Ovary (tissue), 10 donors: ENCODE measurements at regions of chr17 and their contacts with region 1.

Region 1: GRCh38 chr17:35373984-35374765 is 754 bp upstream of the SLFN11 start:
- DNase-seq: peak; percentile 58 to 80 (median 73)
- H3K4me3 ChIP-seq: peak overlapping the region; percentile 78
- H3K27ac ChIP-seq: peak overlapping the region; percentile 95 to 98
- H3K4me1 ChIP-seq: no peaks in the 10 kb centered on the region
- H3K27me3 ChIP-seq: no peaks in the 10 kb centered on the region
- CTCF ChIP-seq: no peak
- EP300 ChIP-seq: no peak
- POLR2A ChIP-seq: no peak

Region 2: DNA sequence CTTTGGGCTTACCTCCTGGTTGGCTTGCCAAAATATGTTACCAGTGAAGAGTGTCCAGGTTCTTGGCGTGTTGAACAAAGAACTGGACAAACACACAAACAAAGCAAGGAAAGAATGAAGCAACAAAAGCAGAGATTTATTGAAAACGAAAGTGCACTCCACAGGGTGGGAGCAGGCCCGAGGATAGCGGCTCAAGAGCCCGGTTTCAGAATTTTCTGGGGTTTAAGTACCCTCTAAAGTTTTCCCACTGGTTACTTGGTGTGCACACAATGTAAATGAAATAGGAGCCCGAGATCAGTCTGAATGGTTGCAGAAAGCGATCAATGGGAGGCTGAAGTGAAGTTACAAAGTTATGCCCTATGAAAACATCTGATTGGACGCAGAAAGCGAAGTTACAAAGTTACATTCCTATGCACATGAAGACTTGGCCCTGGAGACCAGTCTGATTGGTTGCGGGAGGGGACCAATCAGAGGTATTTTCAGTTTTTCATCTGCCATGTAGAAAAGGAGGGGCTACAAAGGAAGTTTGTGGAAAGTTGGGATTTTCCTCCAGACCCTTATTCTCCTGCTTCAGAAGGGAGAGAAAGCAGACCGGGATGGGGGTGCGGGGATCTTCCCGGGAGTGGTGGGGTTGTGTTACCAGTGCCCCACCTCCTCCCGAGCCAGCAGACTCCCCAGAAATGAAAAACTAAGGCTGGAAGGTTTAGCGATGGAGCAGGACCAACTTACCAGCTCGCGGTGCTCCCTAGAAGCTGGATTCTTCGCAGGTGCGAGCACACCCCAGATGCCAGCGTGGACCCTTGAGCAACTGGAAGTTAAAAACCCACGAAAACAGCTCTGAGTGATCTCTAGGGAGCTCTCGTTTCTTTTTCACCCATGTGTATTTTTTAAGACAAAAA is 58.2 kb after region 1 on chr17 and contains the start of gene SLFN12:
- intact Hi-C with region 1: loop called in 1 of 4 experiments (anchors 2 kb)
- DNase-seq: peak; percentile 55 to 74 (median 58)
- H3K4me3 ChIP-seq: peak within 1 kb of the TSS; percentile 54
- H3K27ac ChIP-seq: peak within 1 kb of the TSS; percentile 54 to 84
- H3K4me1 ChIP-seq: peaks cover 12% of the 10 kb centered on the region
- H3K27me3 ChIP-seq: no peaks in the 10 kb centered on the region
- CTCF ChIP-seq: no peak
- EP300 ChIP-seq: no peak
- POLR2A ChIP-seq: peak; percentile 17
- total RNA-seq, gene SLFN12: 7.0 to 11.3 (median 7.8) TPM